GM12878 (cell line): ENCODE measurements at regions of chr14 and their contacts with region 1.

Region 1: DNA sequence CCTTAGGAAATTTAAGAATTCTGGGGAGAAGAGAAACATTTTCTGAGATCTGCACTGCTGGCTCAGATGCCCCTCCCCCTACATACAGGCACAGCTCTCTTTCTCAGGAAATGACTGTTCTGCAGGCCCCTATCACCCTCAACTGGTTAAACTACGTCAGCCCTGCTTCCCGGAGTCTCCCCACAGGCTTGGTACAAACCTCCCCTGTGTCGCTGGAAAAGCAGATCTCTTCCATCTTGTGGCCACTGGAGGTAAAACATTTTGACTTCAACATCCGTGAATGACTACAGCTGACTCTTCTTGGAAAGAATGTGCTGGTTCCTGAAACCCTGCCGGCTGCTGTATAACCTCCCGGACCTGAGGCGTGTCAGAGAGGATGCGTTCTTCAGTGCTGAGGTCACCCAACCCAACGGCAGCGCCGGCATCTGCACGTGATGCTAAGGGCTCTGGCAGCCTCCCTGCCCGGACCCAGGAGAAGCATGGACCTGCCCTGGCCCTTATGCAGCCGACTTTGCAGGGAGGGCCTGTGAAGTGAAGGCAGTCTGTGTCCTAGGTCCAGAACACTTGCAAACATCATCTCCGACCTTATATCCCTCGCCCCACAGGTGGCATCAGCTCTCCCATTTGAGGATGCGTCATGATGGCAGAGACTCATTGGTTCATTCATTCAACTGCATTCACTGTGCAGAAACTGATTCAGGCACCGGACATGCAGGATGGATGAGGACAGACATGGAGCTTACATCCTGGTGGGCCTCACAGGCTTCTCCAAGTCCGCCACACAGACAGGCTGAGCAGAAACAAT is 129.3 kb downstream of the GCH1 start:
- DNase-seq: peak; percentile 35
- ATAC-seq: peak; percentile 77
- H3K4me3 ChIP-seq: no peak overlapping the region
- H3K27ac ChIP-seq: no peak overlapping the region
- H3K4me1 ChIP-seq: peaks cover 30% of the 10 kb centered on the region
- H3K27me3 ChIP-seq: no peaks in the 10 kb centered on the region; a peak in 1 of 4 replicates
- CTCF ChIP-seq: peak; percentile 33 to 43 (median 37); a peak in 5 of 6 replicates
- EP300 ChIP-seq: no peak; a peak in 1 of 4 replicates
- POLR2A ChIP-seq: no peak
- RAD21 ChIP-seq: peak; percentile 48

Region 2: DNA sequence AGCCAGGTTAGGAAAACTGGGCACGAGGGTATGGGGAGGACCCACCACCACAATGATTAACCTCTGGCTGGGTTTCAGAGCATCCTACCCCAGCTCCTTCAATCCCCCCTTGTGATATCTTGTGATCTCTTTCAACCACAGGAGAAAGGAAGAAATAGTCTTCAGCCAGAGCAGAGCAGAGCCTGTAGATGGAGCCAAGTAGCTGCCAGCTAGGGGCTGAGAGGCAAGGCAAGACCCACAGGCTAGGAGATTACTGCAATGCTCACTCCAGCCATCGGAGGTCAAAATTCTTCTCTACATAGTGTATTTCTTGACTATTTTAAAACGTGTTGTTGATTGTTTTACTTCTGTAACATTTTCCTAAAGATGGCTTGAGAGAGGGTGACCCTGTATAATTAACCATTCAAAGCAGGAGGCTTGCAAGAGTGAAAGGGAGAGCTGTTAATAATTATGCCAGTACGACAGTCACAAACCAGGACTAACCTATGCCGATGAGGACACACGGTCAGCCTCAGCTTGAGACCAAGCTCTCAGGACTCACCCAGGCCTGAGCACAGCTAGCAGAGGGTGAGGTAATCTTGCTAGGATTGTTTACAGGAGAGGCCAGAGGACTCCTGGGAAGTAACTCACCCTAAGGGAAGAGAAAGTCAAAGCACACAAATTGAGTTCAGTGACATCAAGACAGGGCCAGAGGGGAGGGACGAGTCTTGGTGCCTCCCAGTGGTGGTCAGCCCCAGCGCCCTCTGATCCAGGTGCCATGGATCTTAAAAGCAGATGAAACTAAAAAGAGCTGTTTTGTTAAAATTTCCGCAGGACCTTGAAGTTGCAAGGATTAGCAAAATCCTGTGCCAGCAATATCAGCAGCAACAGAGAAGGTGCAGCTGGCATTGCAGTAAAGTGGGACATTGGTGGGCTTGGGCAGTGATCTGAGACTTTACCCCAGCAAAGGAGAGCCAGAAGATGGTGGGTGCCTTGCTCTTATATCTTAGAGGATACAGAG is 406.3 kb before region 1 on chr14:
- CTCF ChIA-PET with region 1: no interaction called
- POLR2A ChIA-PET with region 1: no interaction called
- RAD21 ChIA-PET with region 1: no interaction called
- SMC1A ChIA-PET with region 1: interaction called, 3 read pairs
- in situ Hi-C with region 1: no loop called
- intact Hi-C with region 1: loop called (anchors 10 kb)
- DNase-seq: no peak
- ATAC-seq: peak; percentile 95
- H3K4me3 ChIP-seq: no peak overlapping the region
- H3K27ac ChIP-seq: no peak overlapping the region
- H3K4me1 ChIP-seq: no peaks in the 10 kb centered on the region
- H3K27me3 ChIP-seq: 0 out of 4 replicates have a peak, but pooled peaks cover 0 to 3% of the 10 kb centered on the region in 2 experiments
- CTCF ChIP-seq: peak; percentile 54 to 74 (median 58); a peak in 5 of 6 replicates
- EP300 ChIP-seq: no peak
- POLR2A ChIP-seq: no peak
- RAD21 ChIP-seq: peak; percentile 75

Region 3: DNA sequence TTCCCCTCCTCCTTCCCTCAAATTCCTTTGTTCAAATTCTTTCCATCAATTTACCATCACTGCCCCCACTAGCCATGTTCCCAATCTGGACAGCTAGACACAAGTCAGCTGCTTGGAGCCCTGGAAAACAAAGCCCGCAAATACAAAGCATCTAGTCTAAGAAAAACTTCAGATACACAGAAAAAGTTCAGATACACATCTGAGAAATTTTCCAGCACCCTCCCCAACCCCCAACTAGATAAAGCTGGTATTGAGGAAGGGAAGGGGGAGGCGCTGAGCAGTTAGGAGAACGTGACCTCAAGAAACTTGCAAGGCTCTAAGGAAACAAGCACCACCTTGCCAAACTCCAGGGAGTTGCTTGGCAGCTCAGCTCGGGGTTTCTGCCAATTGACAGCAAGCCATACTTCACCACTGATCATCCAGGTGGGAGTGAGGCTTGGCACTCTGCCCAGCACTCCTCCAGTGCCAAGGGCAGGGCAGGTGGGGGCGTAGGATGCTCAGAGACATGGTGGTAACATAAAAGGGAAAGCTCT is 327.1 kb before region 1 on chr14:
- CTCF ChIA-PET with region 1: no interaction called
- POLR2A ChIA-PET with region 1: no interaction called
- RAD21 ChIA-PET with region 1: no interaction called
- SMC1A ChIA-PET with region 1: no interaction called
- in situ Hi-C with region 1: no loop called
- intact Hi-C with region 1: no loop called
- DNase-seq: no peak
- ATAC-seq: no peak
- H3K4me3 ChIP-seq: no peak overlapping the region
- H3K27ac ChIP-seq: no peak overlapping the region
- H3K4me1 ChIP-seq: peaks cover 3% of the 10 kb centered on the region; the same call in 1 of the 2 replicates
- H3K27me3 ChIP-seq: no peaks in the 10 kb centered on the region
- CTCF ChIP-seq: no peak
- EP300 ChIP-seq: no peak
- POLR2A ChIP-seq: no peak
- RAD21 ChIP-seq: no peak

Region 4: DNA sequence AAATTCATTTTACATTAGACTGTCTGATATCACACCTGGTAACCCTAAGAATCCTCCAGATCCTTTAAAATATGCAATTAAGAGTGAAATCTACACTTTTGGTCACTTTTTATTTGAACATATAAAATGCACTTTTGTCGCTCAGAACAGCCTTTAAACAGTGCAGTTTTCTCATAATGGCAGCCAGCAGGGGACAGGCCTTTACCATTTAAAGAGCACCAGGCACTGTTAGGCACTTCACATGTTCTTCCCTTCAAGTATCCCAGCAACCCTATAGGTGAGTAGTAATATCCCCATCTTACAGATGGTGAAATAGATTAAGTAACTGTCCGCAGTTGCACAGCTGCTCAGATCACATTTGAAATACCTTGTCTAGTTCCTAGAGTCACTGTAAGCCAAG is 217.7 kb before region 1 on chr14:
- CTCF ChIA-PET with region 1: interaction called, 4 read pairs
- POLR2A ChIA-PET with region 1: no interaction called
- RAD21 ChIA-PET with region 1: interaction called, 3 read pairs
- SMC1A ChIA-PET with region 1: interaction called, 5 read pairs
- in situ Hi-C with region 1: loop called (anchors 5 kb)
- intact Hi-C with region 1: no loop called
- DNase-seq: no peak
- ATAC-seq: no peak
- H3K4me3 ChIP-seq: no peak overlapping the region
- H3K27ac ChIP-seq: no peak overlapping the region
- H3K4me1 ChIP-seq: no peaks in the 10 kb centered on the region
- H3K27me3 ChIP-seq: no peaks in the 10 kb centered on the region
- CTCF ChIP-seq: 0 out of 6 replicates have a peak, but pooled peaks of 1 of the 3 experiments have one; percentile 9
- EP300 ChIP-seq: no peak
- POLR2A ChIP-seq: no peak
- RAD21 ChIP-seq: 0 out of 2 replicates have a peak, but pooled peaks have one; percentile 21

Region 5: GRCh38 chr14:54627540-54628363 is 145.6 kb before region 1 on chr14:
- CTCF ChIA-PET with region 1: interaction called, 5 read pairs
- POLR2A ChIA-PET with region 1: interaction called, 12 read pairs
- RAD21 ChIA-PET with region 1: interaction called, 7 read pairs
- SMC1A ChIA-PET with region 1: interaction called, 6 read pairs
- in situ Hi-C with region 1: no loop called
- intact Hi-C with region 1: no loop called
- DNase-seq: peak; percentile 57
- ATAC-seq: peak; percentile 82
- H3K4me3 ChIP-seq: peak overlapping the region; percentile 39; the same call in 1 of the 2 replicates
- H3K27ac ChIP-seq: peak overlapping the region; percentile 51
- H3K4me1 ChIP-seq: peaks cover 19% of the 10 kb centered on the region
- H3K27me3 ChIP-seq: no peaks in the 10 kb centered on the region
- CTCF ChIP-seq: no peak
- EP300 ChIP-seq: 0 out of 4 replicates have a peak, but pooled peaks of 1 of the 2 experiments have one; percentile 35
- POLR2A ChIP-seq: no peak
- RAD21 ChIP-seq: no peak

Region 6: GRCh38 chr14:54691525-54692283 is 81.7 kb before region 1 on chr14:
- CTCF ChIA-PET with region 1: interaction called, 27 read pairs
- POLR2A ChIA-PET with region 1: no interaction called
- RAD21 ChIA-PET with region 1: interaction called, 18 read pairs
- SMC1A ChIA-PET with region 1: interaction called, 5 read pairs
- in situ Hi-C with region 1: no loop called
- intact Hi-C with region 1: no loop called
- DNase-seq: no peak
- ATAC-seq: peak; percentile 91
- H3K4me3 ChIP-seq: no peak overlapping the region
- H3K27ac ChIP-seq: no peak overlapping the region
- H3K4me1 ChIP-seq: no peaks in the 10 kb centered on the region
- H3K27me3 ChIP-seq: no peaks in the 10 kb centered on the region
- CTCF ChIP-seq: peak; percentile 71 to 89 (median 78)
- EP300 ChIP-seq: no peak
- POLR2A ChIP-seq: no peak
- RAD21 ChIP-seq: peak; percentile 76

Region 7: GRCh38 chr14:54722781-54723432 is 50.5 kb before region 1 on chr14:
- CTCF ChIA-PET with region 1: interaction called, 71 read pairs
- POLR2A ChIA-PET with region 1: no interaction called
- RAD21 ChIA-PET with region 1: interaction called, 5 read pairs
- SMC1A ChIA-PET with region 1: interaction called, 10 read pairs
- in situ Hi-C with region 1: no loop called
- intact Hi-C with region 1: no loop called
- DNase-seq: no peak
- ATAC-seq: peak; percentile 75
- H3K4me3 ChIP-seq: no peak overlapping the region
- H3K27ac ChIP-seq: no peak overlapping the region
- H3K4me1 ChIP-seq: no peaks in the 10 kb centered on the region
- H3K27me3 ChIP-seq: no peaks in the 10 kb centered on the region; a peak in 1 of 4 replicates
- CTCF ChIP-seq: peak; percentile 43 to 56 (median 53); a peak in 5 of 6 replicates
- EP300 ChIP-seq: no peak
- POLR2A ChIP-seq: no peak
- RAD21 ChIP-seq: peak; percentile 85

Region 8: DNA sequence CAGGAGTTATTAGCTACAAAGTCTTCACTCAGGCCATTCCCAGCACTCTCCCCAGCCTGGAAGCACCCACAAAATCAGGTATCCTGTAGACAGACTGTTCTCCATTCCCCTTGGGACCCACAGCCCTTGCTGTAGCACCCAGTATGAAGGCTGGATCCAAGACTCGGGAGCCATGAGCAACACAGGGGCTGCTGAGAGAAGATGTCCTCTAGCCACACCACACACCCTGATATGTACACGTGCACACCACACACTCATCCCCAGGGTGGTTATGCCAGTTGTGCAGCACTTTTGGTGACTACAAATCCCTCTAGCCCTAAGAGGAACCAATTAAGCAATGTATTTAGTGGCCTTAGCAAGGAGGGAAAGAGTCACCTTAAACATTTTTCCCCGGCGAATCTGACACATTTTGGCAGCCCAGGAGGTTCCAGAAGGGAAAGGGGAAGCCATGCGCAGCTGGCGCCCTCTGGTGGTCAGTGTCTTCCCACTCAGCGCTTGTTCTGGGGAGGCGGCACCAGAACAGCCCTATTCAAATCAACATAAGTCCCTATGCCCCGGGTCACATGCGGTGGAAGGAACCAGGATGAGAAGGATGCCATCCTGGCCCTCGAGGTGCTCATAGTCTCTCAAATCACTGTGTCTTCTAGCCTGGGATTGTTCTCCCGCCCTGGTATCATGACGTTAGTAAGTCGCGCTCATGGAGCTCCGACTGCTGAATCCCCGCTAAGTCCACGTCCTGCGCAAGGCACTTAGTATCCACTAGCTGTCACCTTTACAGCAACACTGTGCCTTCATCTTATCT is 32.3 kb after region 1 on chr14:
- CTCF ChIA-PET with region 1: interaction called, 34 read pairs
- POLR2A ChIA-PET with region 1: no interaction called
- RAD21 ChIA-PET with region 1: interaction called, 4 read pairs
- SMC1A ChIA-PET with region 1: interaction called, 4 read pairs
- in situ Hi-C with region 1: no loop called
- intact Hi-C with region 1: loop called (anchors 1 kb)
- DNase-seq: peak; percentile 27
- ATAC-seq: peak; percentile 96
- H3K4me3 ChIP-seq: no peak overlapping the region
- H3K27ac ChIP-seq: no peak overlapping the region
- H3K4me1 ChIP-seq: no peaks in the 10 kb centered on the region
- H3K27me3 ChIP-seq: no peaks in the 10 kb centered on the region
- CTCF ChIP-seq: peak; percentile 91 to 94 (median 93)
- EP300 ChIP-seq: no peak
- POLR2A ChIP-seq: no peak
- RAD21 ChIP-seq: peak; percentile 89

Region 9: DNA sequence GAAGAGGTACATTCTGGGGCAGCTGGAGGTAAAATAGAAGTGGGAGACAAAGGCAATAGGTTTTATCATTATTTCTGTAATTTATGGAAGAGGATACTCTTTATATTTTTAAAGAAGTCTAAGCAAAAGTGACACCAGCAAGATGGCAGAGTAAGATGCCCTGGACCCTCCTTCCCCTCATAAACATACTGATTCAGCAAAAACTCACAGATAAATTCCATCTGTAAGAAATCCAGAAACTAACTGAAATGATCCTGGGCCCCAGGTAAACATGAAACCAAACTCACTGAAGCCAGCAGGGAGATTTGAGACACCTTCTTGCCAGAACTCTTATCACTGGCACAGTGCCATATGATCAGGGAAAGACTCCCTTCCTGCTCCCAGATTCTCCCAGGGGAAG is 49.3 kb after region 1 on chr14:
- CTCF ChIA-PET with region 1: no interaction called
- POLR2A ChIA-PET with region 1: no interaction called
- RAD21 ChIA-PET with region 1: no interaction called
- SMC1A ChIA-PET with region 1: no interaction called
- in situ Hi-C with region 1: no loop called
- intact Hi-C with region 1: no loop called
- DNase-seq: no peak
- ATAC-seq: no peak
- H3K4me3 ChIP-seq: no peak overlapping the region
- H3K27ac ChIP-seq: no peak overlapping the region
- H3K4me1 ChIP-seq: no peaks in the 10 kb centered on the region
- H3K27me3 ChIP-seq: no peaks in the 10 kb centered on the region; a peak in 1 of 4 replicates
- CTCF ChIP-seq: no peak
- EP300 ChIP-seq: no peak
- POLR2A ChIP-seq: no peak
- RAD21 ChIP-seq: no peak